GM12878 (cell line): ENCODE measurements at regions of chr16 and their contacts with region 1.

Region 1: GRCh38 chr16:22297114-22297878 is at the start of gene POLR3E:
- DNase-seq: no peak
- ATAC-seq: peak; percentile 89
- H3K4me3 ChIP-seq: peak within 1 kb of the TSS; percentile 88
- H3K27ac ChIP-seq: peak within 1 kb of the TSS; percentile 85
- H3K4me1 ChIP-seq: peaks cover 13% of the 10 kb centered on the region
- H3K27me3 ChIP-seq: no peaks in the 10 kb centered on the region
- CTCF ChIP-seq: peak; percentile 90 to 97 (median 91)
- EP300 ChIP-seq: peak; percentile 4 to 92; a peak in 1 of 4 replicates
- POLR2A ChIP-seq: peak; percentile 90
- RAD21 ChIP-seq: peak; percentile 86
- polyA plus RNA-seq, gene POLR3E: 11.1 to 15.5 TPM

Region 2: GRCh38 chr16:22014271-22014873 is 282.9 kb before region 1 on chr16:
- CTCF ChIA-PET with region 1: interaction called, 3 read pairs
- POLR2A ChIA-PET with region 1: no interaction called
- RAD21 ChIA-PET with region 1: no interaction called
- SMC1A ChIA-PET with region 1: no interaction called
- in situ Hi-C with region 1: no loop called
- intact Hi-C with region 1: loop called (anchors 5 kb)
- DNase-seq: no peak
- ATAC-seq: peak; percentile 78
- H3K4me3 ChIP-seq: peak overlapping the region; percentile 45; the same call in 1 of the 2 replicates
- H3K27ac ChIP-seq: no peak overlapping the region
- H3K4me1 ChIP-seq: peaks cover 29% of the 10 kb centered on the region
- H3K27me3 ChIP-seq: no peaks in the 10 kb centered on the region
- CTCF ChIP-seq: no peak
- EP300 ChIP-seq: peak in 1 of 2 experiments; percentile 69; a peak in 1 of 4 replicates
- POLR2A ChIP-seq: no peak
- RAD21 ChIP-seq: no peak

Region 3: GRCh38 chr16:22198547-22199293 is 98.6 kb before region 1 on chr16:
- CTCF ChIA-PET with region 1: interaction called, 132 read pairs
- POLR2A ChIA-PET with region 1: interaction called, 21 read pairs
- RAD21 ChIA-PET with region 1: interaction called, 62 read pairs
- SMC1A ChIA-PET with region 1: interaction called, 86 read pairs
- in situ Hi-C with region 1: loop called (anchors 5 kb)
- intact Hi-C with region 1: loop called (anchors 1 kb)
- DNase-seq: no peak
- ATAC-seq: peak; percentile 42
- H3K4me3 ChIP-seq: no peak overlapping the region
- H3K27ac ChIP-seq: no peak overlapping the region; the same call in 1 of the 2 replicates
- H3K4me1 ChIP-seq: peaks cover 31% of the 10 kb centered on the region
- H3K27me3 ChIP-seq: no peaks in the 10 kb centered on the region
- CTCF ChIP-seq: peak; percentile 2 to 31 (median 30); a peak in 4 of 6 replicates
- EP300 ChIP-seq: no peak
- POLR2A ChIP-seq: no peak
- RAD21 ChIP-seq: peak; percentile 35; the same call in 1 of the 2 replicates

Region 4: DNA sequence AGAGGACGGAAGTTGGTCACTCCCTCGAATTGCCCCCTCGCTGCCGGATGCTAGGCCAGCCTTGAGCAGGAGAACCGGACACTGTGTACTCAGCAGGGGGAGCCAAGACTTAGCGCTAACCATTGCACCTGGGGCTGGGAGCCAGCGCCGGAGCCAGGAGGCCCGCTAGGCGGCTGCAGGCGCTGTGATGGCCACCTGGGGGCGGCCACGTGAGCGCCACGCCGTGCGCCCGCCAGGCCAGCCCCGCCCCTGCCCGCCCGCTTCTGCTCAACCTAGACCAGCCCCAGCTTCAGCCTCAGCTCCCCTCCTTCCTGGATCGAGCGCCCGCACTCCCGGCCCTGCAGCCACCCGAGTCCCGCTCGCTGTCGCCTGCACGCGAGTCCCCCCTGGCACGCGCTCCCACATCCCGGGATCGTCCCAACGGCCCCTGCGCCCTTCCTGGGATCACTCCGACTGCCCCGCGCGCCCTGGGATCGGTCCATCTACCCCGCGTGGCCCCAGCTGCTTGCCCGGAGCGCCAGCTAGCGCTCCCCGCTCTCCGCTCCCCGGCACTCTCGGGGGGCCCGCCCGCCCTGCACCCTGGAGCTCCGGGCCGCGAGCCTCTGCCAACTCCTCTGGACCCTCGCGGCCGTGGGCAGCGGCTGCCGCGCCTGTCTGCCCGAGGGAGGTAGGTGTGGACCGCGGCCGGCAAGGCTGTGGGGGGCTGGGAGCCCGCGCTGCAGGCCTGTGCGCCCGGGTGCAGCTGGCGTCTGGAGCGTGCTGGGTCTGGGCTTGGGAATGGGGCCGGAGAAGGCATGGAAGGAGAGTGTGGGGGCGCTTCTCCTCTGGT is 91.1 kb before region 1 on chr16 and contains the start of gene EEF2K:
- CTCF ChIA-PET with region 1: interaction called, 65 read pairs
- POLR2A ChIA-PET with region 1: interaction called, 10 read pairs
- RAD21 ChIA-PET with region 1: interaction called, 41 read pairs
- SMC1A ChIA-PET with region 1: interaction called, 23 read pairs
- in situ Hi-C with region 1: no loop called
- intact Hi-C with region 1: loop called (anchors 1 kb)
- DNase-seq: peak; percentile 83
- ATAC-seq: peak; percentile 92
- H3K4me3 ChIP-seq: peak within 1 kb of the TSS; percentile 88
- H3K27ac ChIP-seq: peak within 1 kb of the TSS; percentile 65
- H3K4me1 ChIP-seq: peaks cover 11% of the 10 kb centered on the region
- H3K27me3 ChIP-seq: no peaks in the 10 kb centered on the region
- CTCF ChIP-seq: peak; percentile 76 to 93 (median 76)
- EP300 ChIP-seq: peak; percentile 28 to 37; a peak in 2 of 4 replicates
- POLR2A ChIP-seq: peak; percentile 81
- RAD21 ChIP-seq: peak; percentile 59
- polyA plus RNA-seq, gene EEF2K: 2.0 to 2.4 TPM

Region 5: DNA sequence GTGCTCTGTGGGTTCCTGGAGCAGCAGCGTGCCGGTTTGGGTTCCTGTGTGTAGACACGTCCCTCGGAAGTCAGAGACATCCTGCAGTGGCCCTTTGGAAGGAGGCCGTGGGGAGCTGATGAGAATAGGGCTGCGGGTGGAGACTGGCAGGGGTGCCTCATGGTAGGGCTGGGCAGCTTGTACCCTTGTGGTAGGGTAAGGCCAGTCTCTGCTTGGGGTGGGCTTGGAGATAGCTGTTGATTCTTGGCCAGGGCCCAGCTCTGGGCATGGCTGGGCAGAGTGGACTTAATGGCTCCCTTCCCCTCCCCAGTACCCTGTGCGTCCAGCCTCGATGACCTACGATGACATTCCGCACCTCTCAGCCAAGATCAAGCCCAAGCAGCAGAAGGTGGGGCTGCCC is 10.5 kb after region 1 on chr16:
- CTCF ChIA-PET with region 1: interaction called, 21 read pairs
- POLR2A ChIA-PET with region 1: no interaction called
- RAD21 ChIA-PET with region 1: no interaction called
- SMC1A ChIA-PET with region 1: interaction called, 3 read pairs
- in situ Hi-C with region 1: no loop called
- intact Hi-C with region 1: no loop called
- DNase-seq: no peak
- ATAC-seq: no peak
- H3K4me3 ChIP-seq: no peak overlapping the region
- H3K27ac ChIP-seq: no peak overlapping the region
- H3K4me1 ChIP-seq: no peaks in the 10 kb centered on the region
- H3K27me3 ChIP-seq: no peaks in the 10 kb centered on the region
- CTCF ChIP-seq: no peak
- EP300 ChIP-seq: no peak
- POLR2A ChIP-seq: no peak
- RAD21 ChIP-seq: no peak